PC-3 (cell line): ENCODE measurements at regions of chr3 and their contacts with region 1.

Region 1: DNA sequence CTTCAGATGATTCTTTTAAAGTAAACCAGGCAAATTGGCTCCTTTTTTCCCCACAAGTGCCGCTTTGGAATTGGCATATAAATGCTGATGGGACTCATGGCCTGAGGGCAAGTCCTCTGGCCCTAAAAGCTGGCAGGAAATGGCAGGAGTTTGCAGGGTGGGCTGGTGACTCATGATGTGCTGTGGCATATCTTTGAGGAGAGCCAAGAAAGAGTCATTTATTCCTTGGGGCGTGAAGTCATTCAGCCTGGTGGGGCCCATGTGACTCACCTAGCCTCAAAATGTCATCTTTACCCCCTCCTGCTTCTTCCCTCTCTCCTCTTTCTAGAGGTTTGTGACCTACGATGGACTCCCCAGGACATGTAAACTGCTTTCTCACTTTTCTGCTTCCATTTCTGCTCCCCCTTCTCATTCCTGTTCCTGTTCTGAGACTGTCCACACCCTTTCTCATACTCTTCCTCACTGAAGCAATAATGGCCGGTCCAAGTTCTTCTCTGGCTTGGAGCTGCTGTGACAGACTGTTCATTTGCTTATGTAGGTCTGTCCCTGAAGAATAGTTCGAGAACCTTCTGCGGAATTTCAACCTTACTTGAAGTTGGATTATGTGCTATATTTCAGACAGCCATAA is 326.1 kb downstream of the SATB1 start:
- DNase-seq: peak; percentile 99
- ATAC-seq: peak; percentile 83
- H3K4me3 ChIP-seq: peak overlapping the region; percentile 41; the same call in 1 of the 2 replicates
- H3K27ac ChIP-seq: peak overlapping the region; percentile 99
- H3K4me1 ChIP-seq: peaks cover 43% of the 10 kb centered on the region
- H3K27me3 ChIP-seq: no peaks in the 10 kb centered on the region
- CTCF ChIP-seq: no peak

Region 2: DNA sequence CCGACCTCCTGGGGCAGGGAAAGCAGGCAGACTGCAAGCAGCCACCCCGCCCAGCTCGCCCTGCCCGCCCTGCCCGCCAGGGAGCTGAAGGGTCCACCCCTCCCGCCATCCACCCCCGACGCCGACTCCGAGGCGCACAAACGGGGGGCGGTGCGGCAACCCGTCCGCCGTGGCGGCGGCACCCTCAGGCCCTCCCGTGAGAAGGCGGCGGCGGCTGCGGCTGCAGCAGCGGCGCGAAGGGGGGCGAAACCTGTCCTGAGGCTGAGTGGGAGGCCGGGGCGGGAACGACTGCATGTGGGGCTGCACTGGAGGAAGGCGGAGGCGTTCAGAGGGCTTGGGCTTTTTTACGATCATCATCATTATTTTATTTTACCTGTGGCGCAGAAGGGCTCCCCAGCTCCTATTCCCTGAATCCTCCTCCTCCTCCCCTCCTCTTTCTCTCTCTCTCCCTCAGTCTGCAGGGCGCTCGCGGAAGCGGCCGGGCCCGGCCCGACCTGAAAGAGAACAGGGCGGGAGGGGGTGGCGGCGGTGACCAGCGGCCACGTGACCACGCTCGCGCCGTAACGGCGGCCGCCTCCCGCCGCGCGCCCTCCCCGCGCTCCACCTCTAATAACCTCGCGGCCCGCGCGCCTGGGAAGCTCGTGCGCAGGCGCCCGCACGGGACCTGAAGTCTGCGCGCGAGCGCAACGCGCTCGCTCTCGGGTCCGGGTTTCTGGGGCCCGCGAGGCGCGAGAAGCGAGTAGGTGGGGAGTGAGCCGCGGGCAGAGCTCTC is 356.8 kb before region 1 on chr3 and contains the start of gene TBC1D5:
- CTCF ChIA-PET with region 1: no interaction called
- POLR2A ChIA-PET with region 1: interaction called, 3 read pairs
- intact Hi-C with region 1: loop called (anchors 10 kb)
- DNase-seq: peak; percentile 99
- ATAC-seq: peak; percentile 82
- H3K4me3 ChIP-seq: peak within 1 kb of the TSS; percentile 75
- H3K27ac ChIP-seq: peak within 1 kb of the TSS; percentile 79
- H3K4me1 ChIP-seq: peaks cover 24% of the 10 kb centered on the region
- H3K27me3 ChIP-seq: no peaks in the 10 kb centered on the region
- CTCF ChIP-seq: no peak
- total RNA-seq, gene TBC1D5: 54.4 and 54.5 TPM in 2 replicates

Region 3: DNA sequence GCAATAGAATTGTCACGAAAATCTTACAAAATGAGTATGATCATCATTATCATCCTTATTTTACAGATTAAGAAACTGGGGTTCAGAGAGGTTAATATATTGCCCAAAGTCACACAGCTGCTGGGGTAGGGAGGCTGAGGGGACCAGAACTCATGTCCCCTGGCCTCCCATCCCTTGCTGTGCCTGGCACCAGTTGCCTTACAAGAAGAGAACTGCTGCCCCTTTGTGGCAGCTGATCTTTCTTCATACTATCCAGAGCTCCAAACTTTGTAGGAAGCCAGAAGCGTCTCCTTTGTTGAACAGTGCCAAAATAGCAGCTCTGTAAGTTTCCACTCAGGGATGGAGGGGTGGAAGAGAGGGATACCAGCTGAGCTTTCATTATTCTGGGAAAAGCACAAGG is 119.8 kb before region 1 on chr3:
- CTCF ChIA-PET with region 1: no interaction called
- POLR2A ChIA-PET with region 1: no interaction called
- intact Hi-C with region 1: loop called (anchors 5 kb)
- DNase-seq: peak; percentile 35
- ATAC-seq: peak; percentile 77
- H3K4me3 ChIP-seq: no peak overlapping the region
- H3K27ac ChIP-seq: no peak overlapping the region
- H3K4me1 ChIP-seq: peaks cover 7% of the 10 kb centered on the region; the same call in 1 of the 2 replicates
- H3K27me3 ChIP-seq: no peaks in the 10 kb centered on the region
- CTCF ChIP-seq: peak; percentile 46; the same call in 1 of the 2 replicates

Region 4: DNA sequence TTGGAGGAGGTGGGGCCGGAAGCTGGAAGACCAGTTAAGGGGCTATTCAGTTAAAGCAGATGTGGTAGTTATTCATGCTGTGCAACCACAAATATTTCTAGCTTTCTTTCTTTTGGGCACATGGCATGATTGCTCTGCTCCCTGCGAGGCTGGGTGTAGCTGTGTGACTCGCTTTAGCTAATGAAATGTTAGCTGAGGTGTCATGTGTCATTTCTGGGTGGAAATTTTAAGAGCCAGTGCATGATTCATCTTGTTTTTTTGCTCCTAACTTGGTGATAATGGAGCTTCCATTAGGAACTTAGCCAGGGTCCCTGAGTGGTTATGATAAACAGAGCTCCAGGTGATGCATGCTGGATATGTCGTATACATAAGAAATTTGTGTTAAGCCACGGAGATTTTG is 25.4 kb after region 1 on chr3:
- CTCF ChIA-PET with region 1: no interaction called
- POLR2A ChIA-PET with region 1: no interaction called
- intact Hi-C with region 1: loop called (anchors 1 kb)
- DNase-seq: peak; percentile 76
- ATAC-seq: peak; percentile 93
- H3K4me3 ChIP-seq: no peak overlapping the region
- H3K27ac ChIP-seq: peak overlapping the region; percentile 25
- H3K4me1 ChIP-seq: peaks cover 11% of the 10 kb centered on the region
- H3K27me3 ChIP-seq: no peaks in the 10 kb centered on the region
- CTCF ChIP-seq: no peak

Region 5: GRCh38 chr3:18208856-18209255 is 109.8 kb after region 1 on chr3:
- CTCF ChIA-PET with region 1: no interaction called
- POLR2A ChIA-PET with region 1: no interaction called
- intact Hi-C with region 1: no loop called
- DNase-seq: no peak
- ATAC-seq: no peak
- H3K4me3 ChIP-seq: no peak overlapping the region
- H3K27ac ChIP-seq: no peak overlapping the region
- H3K4me1 ChIP-seq: no peaks in the 10 kb centered on the region
- H3K27me3 ChIP-seq: no peaks in the 10 kb centered on the region
- CTCF ChIP-seq: no peak

Region 6: GRCh38 chr3:18237251-18238005 is 138.4 kb after region 1 on chr3:
- CTCF ChIA-PET with region 1: no interaction called
- POLR2A ChIA-PET with region 1: no interaction called
- intact Hi-C with region 1: loop called (anchors 1 kb)
- DNase-seq: peak; percentile 91
- ATAC-seq: peak; percentile 91
- H3K4me3 ChIP-seq: peak overlapping the region; percentile 25; the same call in 1 of the 2 replicates
- H3K27ac ChIP-seq: peak overlapping the region; percentile 89
- H3K4me1 ChIP-seq: peaks cover 53% of the 10 kb centered on the region
- H3K27me3 ChIP-seq: no peaks in the 10 kb centered on the region
- CTCF ChIP-seq: no peak

Region 7: GRCh38 chr3:18389108-18389733 is 290.1 kb after region 1 on chr3:
- CTCF ChIA-PET with region 1: no interaction called
- POLR2A ChIA-PET with region 1: interaction called, 6 read pairs
- intact Hi-C with region 1: loop called (anchors 10 kb)
- DNase-seq: peak; percentile 60
- ATAC-seq: no peak
- H3K4me3 ChIP-seq: no peak overlapping the region
- H3K27ac ChIP-seq: no peak overlapping the region
- H3K4me1 ChIP-seq: no peaks in the 10 kb centered on the region
- H3K27me3 ChIP-seq: no peaks in the 10 kb centered on the region
- CTCF ChIP-seq: peak; percentile 83